HepG2 (cell line): ENCODE measurements at regions of chr10 and their contacts with region 1.

Region 1: GRCh38 chr10:84375011-84375410 is 46.6 kb downstream of the CCSER2 start:
- DNase-seq: peak; percentile 51
- ATAC-seq: peak; percentile 53; the same call in 2 of the 3 replicates
- H3K4me3 ChIP-seq: no peak overlapping the region
- H3K27ac ChIP-seq: no peak overlapping the region
- H3K4me1 ChIP-seq: no peaks in the 10 kb centered on the region
- H3K27me3 ChIP-seq: no peaks in the 10 kb centered on the region
- CTCF ChIP-seq: peak; percentile 82
- EP300 ChIP-seq: no peak
- POLR2A ChIP-seq: no peak
- RAD21 ChIP-seq: peak; percentile 55

Region 2: DNA sequence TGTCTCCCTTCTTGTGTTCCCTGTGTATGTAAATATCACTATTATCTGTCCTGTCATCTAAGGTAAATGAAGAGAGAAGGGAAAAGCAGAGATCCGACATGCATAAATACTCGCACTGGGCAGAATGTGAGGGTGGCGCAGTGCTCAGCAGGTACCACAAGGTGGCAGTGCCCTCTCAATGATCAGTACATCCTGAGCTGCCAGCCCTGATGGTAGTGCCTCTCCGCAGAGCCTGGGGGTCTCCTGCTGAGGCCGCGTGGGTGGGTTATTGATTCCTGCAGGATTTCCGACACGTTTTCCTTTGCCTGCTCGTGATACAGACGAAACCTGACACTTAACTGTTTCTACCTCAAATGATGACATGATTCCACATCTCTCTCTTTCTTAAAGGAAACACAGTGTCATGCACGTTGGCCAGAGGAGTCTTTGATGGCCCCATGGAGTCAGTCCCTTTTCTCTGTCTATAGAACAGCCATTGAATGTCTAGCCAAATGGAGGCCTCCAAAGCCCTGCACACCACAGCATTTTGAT is 110.3 kb before region 1 on chr10:
- CTCF ChIA-PET with region 1: no interaction called
- POLR2A ChIA-PET with region 1: no interaction called
- in situ Hi-C with region 1: no loop called
- intact Hi-C with region 1: loop called (anchors 2 kb)
- DNase-seq: peak; percentile 41
- ATAC-seq: peak; percentile 97
- H3K4me3 ChIP-seq: no peak overlapping the region
- H3K27ac ChIP-seq: no peak overlapping the region
- H3K4me1 ChIP-seq: peaks cover 5% of the 10 kb centered on the region; the same call in 1 of the 2 replicates
- H3K27me3 ChIP-seq: peaks cover 3 to 24% of the 10 kb centered on the region in 2 experiments; a peak in 3 of 5 replicates
- CTCF ChIP-seq: peak; percentile 97
- EP300 ChIP-seq: no peak
- POLR2A ChIP-seq: no peak
- RAD21 ChIP-seq: peak; percentile 78

Region 3: DNA sequence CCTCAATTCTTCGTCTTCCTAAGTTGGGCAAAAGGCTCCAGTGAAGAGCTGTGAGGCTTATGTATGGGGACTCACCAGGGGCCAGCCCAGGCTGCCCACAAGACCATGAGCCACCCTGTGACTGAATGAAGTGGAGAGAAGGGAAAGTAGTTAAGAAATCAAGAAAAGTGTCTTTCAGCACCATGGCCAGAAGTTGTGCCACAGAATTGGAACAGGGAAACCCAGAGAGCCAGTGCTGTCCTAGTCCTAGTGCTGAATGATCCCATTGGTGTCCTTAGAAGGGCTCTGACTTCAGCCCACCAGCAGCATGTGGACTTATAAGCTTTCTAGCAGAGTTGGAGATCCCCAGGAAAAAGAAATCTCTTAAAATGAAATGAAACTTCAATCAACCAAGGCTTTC is 83.6 kb before region 1 on chr10:
- CTCF ChIA-PET with region 1: no interaction called
- POLR2A ChIA-PET with region 1: no interaction called
- in situ Hi-C with region 1: no loop called
- intact Hi-C with region 1: no loop called
- DNase-seq: peak; percentile 22
- ATAC-seq: peak; percentile 68; the same call in 2 of the 3 replicates
- H3K4me3 ChIP-seq: no peak overlapping the region
- H3K27ac ChIP-seq: no peak overlapping the region
- H3K4me1 ChIP-seq: peaks cover 3% of the 10 kb centered on the region
- H3K27me3 ChIP-seq: peaks cover 0 to 6% of the 10 kb centered on the region in 2 experiments; a peak in 2 of 5 replicates
- CTCF ChIP-seq: no peak
- EP300 ChIP-seq: no peak
- POLR2A ChIP-seq: no peak
- RAD21 ChIP-seq: no peak

Region 4: GRCh38 chr10:84415539-84416244 is 40.7 kb after region 1 on chr10:
- CTCF ChIA-PET with region 1: no interaction called
- POLR2A ChIA-PET with region 1: no interaction called
- in situ Hi-C with region 1: no loop called
- intact Hi-C with region 1: no loop called
- DNase-seq: no peak
- ATAC-seq: no peak
- H3K4me3 ChIP-seq: no peak overlapping the region
- H3K27ac ChIP-seq: no peak overlapping the region
- H3K4me1 ChIP-seq: peaks cover 17% of the 10 kb centered on the region
- H3K27me3 ChIP-seq: no peaks in the 10 kb centered on the region
- CTCF ChIP-seq: no peak
- EP300 ChIP-seq: no peak
- POLR2A ChIP-seq: no peak
- RAD21 ChIP-seq: no peak

Region 5: GRCh38 chr10:84429926-84430520 is 55.0 kb after region 1 on chr10:
- CTCF ChIA-PET with region 1: no interaction called
- POLR2A ChIA-PET with region 1: no interaction called
- in situ Hi-C with region 1: no loop called
- intact Hi-C with region 1: loop called (anchors 2 kb)
- DNase-seq: peak; percentile 69
- ATAC-seq: peak; percentile 95
- H3K4me3 ChIP-seq: no peak overlapping the region
- H3K27ac ChIP-seq: no peak overlapping the region
- H3K4me1 ChIP-seq: peaks cover 12% of the 10 kb centered on the region
- H3K27me3 ChIP-seq: no peaks in the 10 kb centered on the region
- CTCF ChIP-seq: peak; percentile 83
- EP300 ChIP-seq: no peak
- POLR2A ChIP-seq: no peak
- RAD21 ChIP-seq: peak; percentile 60; the same call in 1 of the 2 replicates

Region 6: DNA sequence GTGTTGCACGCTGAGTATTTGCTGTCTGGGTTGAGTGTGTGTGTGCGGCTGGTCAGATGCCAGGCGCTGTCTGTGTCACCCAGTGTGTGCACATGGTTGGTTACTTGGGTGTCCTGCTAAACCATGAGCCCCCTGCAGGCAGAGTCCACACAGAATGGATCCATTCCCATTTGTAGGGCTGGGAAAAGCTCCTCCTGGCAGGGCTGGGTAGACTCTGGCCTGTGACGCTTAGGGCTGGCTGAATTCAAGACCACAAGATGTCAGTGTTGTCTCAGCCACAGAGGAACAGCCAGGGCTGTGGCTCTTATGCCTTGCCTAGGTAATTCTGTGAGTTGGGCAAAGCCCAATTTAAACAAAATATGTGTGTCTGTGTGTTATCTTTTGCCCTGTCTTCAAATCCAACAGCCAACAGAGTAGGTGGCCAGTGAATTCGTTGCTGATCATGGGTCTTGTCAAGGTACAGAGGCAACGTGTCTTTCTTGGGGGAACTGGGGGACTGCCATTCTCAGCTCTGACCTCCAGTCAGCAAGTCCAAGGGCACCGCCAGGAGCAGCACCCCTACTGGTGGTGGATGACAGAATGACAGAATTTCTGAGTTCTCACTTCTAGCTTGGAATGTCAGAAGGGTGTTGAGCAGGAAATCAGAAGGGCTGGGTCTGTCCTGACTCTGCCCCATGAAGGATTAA is 238.5 kb after region 1 on chr10:
- CTCF ChIA-PET with region 1: no interaction called
- POLR2A ChIA-PET with region 1: no interaction called
- in situ Hi-C with region 1: no loop called
- intact Hi-C with region 1: loop called (anchors 2 kb)
- DNase-seq: peak; percentile 77
- ATAC-seq: peak; percentile 100
- H3K4me3 ChIP-seq: no peak overlapping the region
- H3K27ac ChIP-seq: no peak overlapping the region
- H3K4me1 ChIP-seq: no peaks in the 10 kb centered on the region
- H3K27me3 ChIP-seq: no peaks in the 10 kb centered on the region
- CTCF ChIP-seq: peak; percentile 87
- EP300 ChIP-seq: no peak
- POLR2A ChIP-seq: no peak
- RAD21 ChIP-seq: peak; percentile 83

Region 7: DNA sequence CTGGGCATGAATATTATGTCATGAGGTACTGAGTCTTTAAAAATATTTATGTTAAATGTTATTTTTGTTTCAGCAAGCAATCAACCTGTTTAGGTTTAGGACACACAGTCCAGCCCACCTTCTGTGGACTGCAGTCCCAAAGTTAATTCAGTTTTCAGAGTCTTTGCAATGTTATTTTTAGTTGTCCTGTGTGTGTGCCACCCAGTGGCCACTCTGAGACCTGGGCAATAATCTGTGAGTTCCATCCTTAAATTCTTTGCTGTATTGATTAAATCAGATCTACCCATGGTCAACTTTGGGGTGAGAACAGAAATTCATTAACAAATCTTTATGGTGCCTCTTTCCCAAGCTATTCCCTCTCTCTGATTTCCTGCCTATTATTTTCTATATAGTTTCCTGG is 368.5 kb after region 1 on chr10:
- CTCF ChIA-PET with region 1: no interaction called
- POLR2A ChIA-PET with region 1: no interaction called
- in situ Hi-C with region 1: no loop called
- intact Hi-C with region 1: loop called (anchors 1 kb)
- DNase-seq: peak; percentile 7
- ATAC-seq: peak; percentile 62
- H3K4me3 ChIP-seq: no peak overlapping the region
- H3K27ac ChIP-seq: no peak overlapping the region
- H3K4me1 ChIP-seq: no peaks in the 10 kb centered on the region
- H3K27me3 ChIP-seq: no peaks in the 10 kb centered on the region
- CTCF ChIP-seq: peak; percentile 53
- EP300 ChIP-seq: no peak
- POLR2A ChIP-seq: no peak
- RAD21 ChIP-seq: no peak; the same call in 1 of the 2 replicates